PC-3 (cell line): ENCODE measurements at regions of chr1 and their contacts with region 1.

Region 1: DNA sequence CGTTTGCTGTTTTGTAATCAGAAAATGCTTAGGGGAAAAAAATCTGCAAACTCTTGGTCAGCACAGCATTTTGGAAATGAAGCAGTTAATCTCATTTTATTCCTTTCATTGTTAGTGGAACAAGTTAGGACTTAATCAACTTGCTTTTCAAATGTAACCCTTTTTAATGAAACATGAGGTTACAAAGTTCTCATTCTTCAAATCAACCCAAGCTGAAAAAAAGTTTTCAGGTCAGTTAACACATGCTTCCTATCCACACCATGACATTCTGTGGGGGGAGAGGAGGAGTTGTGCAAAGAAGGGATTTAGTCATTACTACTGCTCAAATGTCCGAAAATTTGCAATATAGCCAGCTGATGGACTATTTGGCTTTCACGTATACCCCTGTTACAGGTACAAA is 283.2 kb upstream of the LYPLAL1 start:
- DNase-seq: no peak
- ATAC-seq: no peak
- H3K4me3 ChIP-seq: no peak overlapping the region
- H3K27ac ChIP-seq: no peak overlapping the region
- H3K4me1 ChIP-seq: peaks cover 54% of the 10 kb centered on the region
- H3K27me3 ChIP-seq: no peaks in the 10 kb centered on the region
- CTCF ChIP-seq: no peak

Region 2: DNA sequence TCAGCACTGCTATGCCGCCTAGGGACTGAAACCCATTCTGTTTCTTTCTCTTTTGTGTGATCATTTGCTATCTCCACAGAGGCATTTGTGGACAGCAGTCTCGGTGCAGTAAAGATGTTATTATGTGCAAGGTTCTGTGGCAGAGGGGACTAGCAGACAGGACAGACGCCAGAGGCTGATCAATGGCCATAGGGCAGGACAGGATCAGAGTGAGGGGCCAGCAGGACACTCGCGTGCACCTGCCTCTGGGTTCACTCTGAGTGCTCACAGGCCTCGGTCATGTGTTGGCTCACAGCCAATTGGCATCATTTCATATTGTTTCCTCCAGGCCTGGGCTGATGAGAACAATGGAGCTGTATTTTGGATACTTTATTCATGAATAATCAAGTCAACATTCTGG is 332.7 kb before region 1 on chr1:
- CTCF ChIA-PET with region 1: no interaction called
- POLR2A ChIA-PET with region 1: no interaction called
- intact Hi-C with region 1: loop called (anchors 10 kb)
- DNase-seq: peak; percentile 93
- ATAC-seq: peak; percentile 83
- H3K4me3 ChIP-seq: no peak overlapping the region
- H3K27ac ChIP-seq: no peak overlapping the region
- H3K4me1 ChIP-seq: peaks cover 11% of the 10 kb centered on the region
- H3K27me3 ChIP-seq: no peaks in the 10 kb centered on the region
- CTCF ChIP-seq: no peak

Region 3: GRCh38 chr1:218779341-218780100 is 110.9 kb before region 1 on chr1:
- CTCF ChIA-PET with region 1: no interaction called
- POLR2A ChIA-PET with region 1: no interaction called
- intact Hi-C with region 1: loop called (anchors 2 kb)
- DNase-seq: peak; percentile 99
- ATAC-seq: peak; percentile 94
- H3K4me3 ChIP-seq: no peak overlapping the region
- H3K27ac ChIP-seq: peak overlapping the region; percentile 78
- H3K4me1 ChIP-seq: peaks cover 27% of the 10 kb centered on the region
- H3K27me3 ChIP-seq: no peaks in the 10 kb centered on the region
- CTCF ChIP-seq: peak; percentile 53

Region 4: DNA sequence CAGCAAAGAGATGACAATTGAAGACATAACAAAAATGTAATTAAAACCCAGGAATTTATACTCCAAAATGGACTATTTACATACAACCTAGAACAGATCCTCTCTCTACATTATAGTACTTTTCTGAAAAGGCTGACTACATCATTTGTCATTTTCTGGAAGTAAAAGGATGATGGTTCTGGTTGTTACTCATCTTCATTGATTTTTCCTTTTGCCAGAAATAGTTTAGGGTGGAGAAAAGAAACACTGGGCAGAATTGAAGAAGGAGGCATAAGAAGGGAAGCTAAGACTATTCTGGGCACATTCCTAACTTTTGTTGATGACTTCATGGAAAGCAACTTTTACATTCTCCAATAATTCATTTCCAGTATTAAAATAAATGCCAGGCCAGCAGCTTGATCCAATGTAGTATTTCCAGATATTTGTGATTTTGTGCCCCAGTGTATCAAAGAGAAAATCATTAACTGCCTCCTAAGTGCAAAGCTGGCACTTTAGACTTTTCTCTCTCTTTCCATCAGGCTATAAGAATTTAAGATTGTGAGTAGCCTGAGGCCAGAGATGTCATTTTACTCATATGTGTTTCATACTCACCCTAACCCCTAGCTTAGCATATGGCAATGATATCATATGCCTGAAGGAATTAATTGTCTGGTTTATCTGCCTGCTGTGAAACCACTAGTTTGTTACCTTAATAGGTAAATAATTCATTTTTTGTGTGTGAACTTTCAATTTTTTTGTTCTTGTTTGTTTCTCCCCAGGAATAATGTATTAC is 86.3 kb before region 1 on chr1:
- CTCF ChIA-PET with region 1: no interaction called
- POLR2A ChIA-PET with region 1: no interaction called
- intact Hi-C with region 1: loop called (anchors 2 kb)
- DNase-seq: peak; percentile 93
- ATAC-seq: peak; percentile 92
- H3K4me3 ChIP-seq: no peak overlapping the region
- H3K27ac ChIP-seq: peak overlapping the region; percentile 77
- H3K4me1 ChIP-seq: peaks cover 31% of the 10 kb centered on the region
- H3K27me3 ChIP-seq: no peaks in the 10 kb centered on the region
- CTCF ChIP-seq: no peak

Region 5: DNA sequence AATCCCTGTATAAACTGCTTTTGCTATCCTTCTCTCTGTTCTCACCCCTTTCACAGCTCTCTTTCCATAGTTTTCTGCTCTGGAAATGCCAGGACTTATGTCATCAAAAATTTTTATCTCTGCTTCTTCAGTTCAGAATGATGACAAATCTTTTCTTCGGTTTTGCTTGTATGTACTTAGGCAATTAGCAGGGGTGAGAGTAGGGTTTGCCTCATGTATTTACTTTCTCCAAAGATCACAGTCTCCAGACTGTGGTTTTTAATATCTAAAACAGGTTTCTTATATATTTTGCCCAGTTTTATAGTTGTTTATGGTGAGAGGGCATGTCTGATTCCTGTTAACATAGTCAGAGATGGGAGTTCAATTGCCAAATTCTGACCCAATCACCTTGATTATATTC is 47.8 kb after region 1 on chr1:
- CTCF ChIA-PET with region 1: no interaction called
- POLR2A ChIA-PET with region 1: no interaction called
- intact Hi-C with region 1: loop called (anchors 2 kb)
- DNase-seq: peak; percentile 83
- ATAC-seq: peak; percentile 72
- H3K4me3 ChIP-seq: no peak overlapping the region
- H3K27ac ChIP-seq: peak overlapping the region; percentile 70
- H3K4me1 ChIP-seq: peaks cover 24% of the 10 kb centered on the region
- H3K27me3 ChIP-seq: no peaks in the 10 kb centered on the region
- CTCF ChIP-seq: no peak